MCF 10A (cell line): ENCODE measurements at regions of chr5 and their contacts with region 1.

Region 1: GRCh38 chr5:39217365-39218281 is 1.7 kb downstream of the FYB1 start:
- DNase-seq: peak; percentile 83
- H3K4me3 Mint-ChIP-seq: no peak overlapping the region
- H3K27ac Mint-ChIP-seq: no peak overlapping the region
- H3K4me1 Mint-ChIP-seq: peaks cover 22% of the 10 kb centered on the region
- H3K27me3 Mint-ChIP-seq: no peaks in the 10 kb centered on the region
- CTCF ChIP-seq: peak; percentile 89

Region 2: DNA sequence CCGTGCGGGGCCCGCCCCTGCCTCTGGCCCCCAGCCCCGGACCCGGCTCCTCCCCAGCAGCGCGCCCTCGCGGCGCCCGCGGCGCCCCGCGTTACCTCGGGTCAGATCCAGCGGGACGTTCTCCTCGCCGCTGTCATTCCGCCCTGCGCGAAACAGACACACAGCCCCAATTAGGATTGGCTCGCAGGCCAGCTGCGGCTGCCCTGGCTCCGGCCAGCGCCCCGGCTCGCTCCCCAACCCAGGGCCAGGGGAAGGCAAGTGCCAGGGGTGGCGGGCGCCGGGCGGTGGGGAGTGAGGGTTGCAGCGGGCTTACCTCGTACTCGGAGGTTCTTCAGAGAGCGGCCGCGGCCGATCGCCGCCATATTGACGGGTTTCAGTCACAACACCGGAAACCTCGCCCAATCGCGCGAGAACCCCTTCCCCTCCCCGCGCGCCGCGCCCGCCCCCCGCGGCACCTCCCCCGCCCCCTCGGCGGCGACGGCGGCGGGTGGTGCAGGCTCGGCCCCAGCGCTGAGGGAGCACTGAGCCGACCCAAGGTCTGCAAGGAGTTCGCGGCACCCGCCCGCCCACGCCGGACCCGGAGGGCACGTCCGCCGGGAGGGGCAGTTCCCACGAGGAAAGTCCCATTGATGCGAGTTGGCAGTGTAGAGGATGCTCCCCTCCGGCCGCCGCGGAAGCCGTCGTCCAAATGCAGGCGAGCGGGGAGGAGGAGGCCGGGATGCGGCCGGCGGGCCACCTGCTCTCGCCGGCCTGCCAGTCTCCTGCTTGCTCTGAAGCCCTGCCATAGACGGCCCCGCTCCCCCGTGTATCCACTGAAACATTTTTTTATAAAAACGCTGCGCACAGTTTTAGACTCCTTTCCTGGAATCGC is 143.4 kb before region 1 on chr5 and contains the start of gene RICTOR:
- CTCF ChIA-PET with region 1: interaction called, 3 read pairs
- POLR2A ChIA-PET with region 1: interaction called, 5 read pairs
- intact Hi-C with region 1: loop called (anchors 5 kb)
- DNase-seq: peak; percentile 88
- H3K4me3 Mint-ChIP-seq: peak within 1 kb of the TSS; percentile 94
- H3K27ac Mint-ChIP-seq: peak within 1 kb of the TSS; percentile 50
- H3K4me1 Mint-ChIP-seq: peaks cover 28% of the 10 kb centered on the region
- H3K27me3 Mint-ChIP-seq: no peaks in the 10 kb centered on the region
- CTCF ChIP-seq: no peak
- total RNA-seq, gene RICTOR: 24.8 and 25.7 TPM in 2 replicates

Region 3: GRCh38 chr5:39201160-39201780 is 16.4 kb before region 1 on chr5:
- CTCF ChIA-PET with region 1: interaction called, 14 read pairs
- POLR2A ChIA-PET with region 1: interaction called, 3 read pairs
- intact Hi-C with region 1: no loop called
- DNase-seq: no peak
- H3K4me3 Mint-ChIP-seq: no peak overlapping the region
- H3K27ac Mint-ChIP-seq: no peak overlapping the region
- H3K4me1 Mint-ChIP-seq: peaks cover 14% of the 10 kb centered on the region
- H3K27me3 Mint-ChIP-seq: no peaks in the 10 kb centered on the region
- CTCF ChIP-seq: no peak

Region 4: DNA sequence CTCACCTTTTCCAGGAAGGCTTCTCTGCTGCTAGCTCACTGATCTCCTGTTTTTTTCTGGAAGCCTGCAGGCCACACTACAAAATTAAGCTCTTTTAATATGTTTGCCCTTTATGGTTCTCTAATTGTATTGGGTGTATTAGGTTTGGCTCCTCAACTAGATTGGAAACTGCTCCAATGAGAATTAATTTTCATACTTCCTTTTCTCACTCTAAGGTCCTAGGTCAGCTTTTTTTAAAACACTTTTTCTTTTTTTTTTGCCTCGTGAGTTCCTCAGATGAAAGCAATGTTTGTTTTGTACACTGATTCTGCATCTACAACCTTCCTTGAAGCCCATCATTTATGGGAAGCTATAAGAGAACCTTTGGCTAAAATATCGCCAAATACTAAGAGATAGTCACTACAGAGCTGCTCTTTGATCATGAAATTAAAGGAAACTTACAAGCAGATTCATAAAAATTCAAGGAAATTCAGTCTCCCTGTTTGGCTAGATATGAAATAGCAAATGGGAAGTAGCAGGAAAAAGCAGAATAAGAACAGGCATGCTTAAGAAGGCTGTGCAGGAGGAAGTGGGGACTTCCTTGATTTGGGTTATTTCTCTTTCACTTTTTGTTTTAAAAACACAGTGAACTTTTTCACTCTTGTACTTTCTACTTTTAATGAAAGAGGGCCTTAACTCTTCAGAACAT is 56.9 kb after region 1 on chr5:
- CTCF ChIA-PET with region 1: interaction called, 32 read pairs
- POLR2A ChIA-PET with region 1: interaction called, 4 read pairs
- intact Hi-C with region 1: no loop called
- DNase-seq: no peak
- H3K4me3 Mint-ChIP-seq: no peak overlapping the region
- H3K27ac Mint-ChIP-seq: no peak overlapping the region
- H3K4me1 Mint-ChIP-seq: no peaks in the 10 kb centered on the region
- H3K27me3 Mint-ChIP-seq: no peaks in the 10 kb centered on the region
- CTCF ChIP-seq: no peak

Region 5: GRCh38 chr5:39547553-39548154 is 330.0 kb after region 1 on chr5:
- CTCF ChIA-PET with region 1: interaction called, 17 read pairs
- POLR2A ChIA-PET with region 1: no interaction called
- intact Hi-C with region 1: loop called (anchors 1 kb)
- DNase-seq: peak; percentile 73
- H3K4me3 Mint-ChIP-seq: no peak overlapping the region
- H3K27ac Mint-ChIP-seq: no peak overlapping the region
- H3K4me1 Mint-ChIP-seq: no peaks in the 10 kb centered on the region
- H3K27me3 Mint-ChIP-seq: no peaks in the 10 kb centered on the region
- CTCF ChIP-seq: peak; percentile 65